ENCODE measurements at regions of chr17 and their contacts with region 1.

Region 1: DNA sequence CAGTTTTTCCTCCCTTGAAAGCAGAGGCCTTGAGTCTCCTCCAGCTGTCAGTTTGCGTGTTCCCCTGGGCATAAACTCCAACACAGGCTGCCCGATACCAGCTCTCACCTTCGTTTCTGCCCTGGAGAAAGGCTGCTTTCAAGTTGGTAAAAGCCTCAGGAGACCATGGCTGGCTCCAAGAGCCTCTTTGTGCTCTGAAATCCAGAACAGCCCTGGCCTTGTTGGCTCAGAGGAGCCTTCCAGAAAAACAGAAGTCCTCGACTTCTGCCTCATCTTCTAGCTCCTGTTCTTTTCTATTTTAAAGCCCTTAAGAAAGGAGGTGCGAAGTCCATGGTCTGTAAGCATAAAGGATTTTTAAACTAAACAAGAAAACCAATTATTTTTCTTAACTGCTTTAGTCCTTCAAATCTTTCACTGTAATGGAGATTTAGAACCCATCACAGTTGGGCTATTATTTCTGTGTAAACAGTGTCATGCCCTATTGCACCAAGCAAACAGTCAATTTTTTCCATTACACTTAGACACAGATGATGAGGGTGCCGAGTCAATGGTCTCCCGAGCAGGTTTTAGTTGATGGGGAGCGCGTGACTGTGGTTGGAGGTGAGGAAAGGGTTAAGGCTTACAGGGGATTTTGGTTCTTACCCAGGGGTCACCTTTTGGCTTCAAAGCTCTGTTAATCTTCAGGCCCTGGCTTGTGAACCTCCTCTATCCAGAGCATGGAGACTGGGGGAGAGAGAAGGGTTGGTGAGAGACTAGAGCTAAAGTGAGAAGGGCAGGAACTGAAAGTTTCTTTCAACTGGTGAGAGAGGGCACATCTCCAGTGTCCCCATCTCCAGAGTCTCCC is 212.8 kb downstream of the MSI2 start:
- DNase-seq: peak; percentile 65
- CTCF ChIP-seq: no peak

Region 2: GRCh38 chr17:57234751-57235117 is 234.4 kb before region 1 on chr17:
- CTCF ChIA-PET with region 1: no interaction called
- POLR2A ChIA-PET with region 1: no interaction called
- DNase-seq: no peak
- CTCF ChIP-seq: no peak

Region 3: GRCh38 chr17:57480438-57481196 is 11.5 kb after region 1 on chr17:
- CTCF ChIA-PET with region 1: interaction called, 12 read pairs
- POLR2A ChIA-PET with region 1: interaction called, 10 read pairs
- DNase-seq: no peak
- CTCF ChIP-seq: no peak